SK-N-SH (cell line): ENCODE measurements at regions of chr15 and their contacts with region 1.

Region 1: DNA sequence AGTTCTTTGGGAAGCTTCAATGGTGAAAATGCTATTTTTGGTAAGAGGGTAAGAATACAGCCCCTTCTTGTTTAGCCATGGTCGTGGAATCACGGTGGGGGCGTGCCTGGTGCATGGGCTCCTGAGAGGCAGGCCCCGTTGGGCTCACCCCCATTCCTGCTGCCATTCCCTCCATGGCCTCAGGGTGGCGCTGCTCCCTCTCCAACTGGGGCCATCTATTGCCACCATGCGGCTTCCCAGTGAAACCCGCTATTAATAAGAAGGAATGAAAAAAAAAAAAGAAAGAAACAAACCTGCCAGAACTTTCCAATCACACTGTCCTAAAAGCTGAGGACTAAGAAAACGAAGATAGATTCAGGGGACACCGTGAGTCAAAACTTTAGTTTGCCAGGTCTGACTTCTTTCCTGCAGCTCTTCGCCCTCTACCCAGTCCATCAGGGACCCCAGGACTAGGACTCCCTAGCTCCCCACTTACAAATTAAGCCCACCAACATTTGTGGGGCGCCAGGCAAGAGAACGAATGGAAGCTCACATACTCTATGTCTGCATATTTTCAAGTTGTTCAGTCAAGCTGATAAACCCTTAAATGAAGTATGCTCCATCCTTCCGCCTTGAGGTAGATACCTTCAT is 30.6 kb upstream of the ABHD2 start:
- DNase-seq: peak; percentile 88
- H3K4me3 ChIP-seq: no peak overlapping the region; a peak in 1 of 4 replicates
- H3K27ac ChIP-seq: no peak overlapping the region
- H3K4me1 ChIP-seq: peaks cover 0 to 2% of the 10 kb centered on the region in 2 experiments; a peak in 1 of 4 replicates
- H3K27me3 ChIP-seq: no peaks in the 10 kb centered on the region
- CTCF ChIP-seq: peak; percentile 99
- EP300 ChIP-seq: no peak
- RAD21 ChIP-seq: peak; percentile 98

Region 2: DNA sequence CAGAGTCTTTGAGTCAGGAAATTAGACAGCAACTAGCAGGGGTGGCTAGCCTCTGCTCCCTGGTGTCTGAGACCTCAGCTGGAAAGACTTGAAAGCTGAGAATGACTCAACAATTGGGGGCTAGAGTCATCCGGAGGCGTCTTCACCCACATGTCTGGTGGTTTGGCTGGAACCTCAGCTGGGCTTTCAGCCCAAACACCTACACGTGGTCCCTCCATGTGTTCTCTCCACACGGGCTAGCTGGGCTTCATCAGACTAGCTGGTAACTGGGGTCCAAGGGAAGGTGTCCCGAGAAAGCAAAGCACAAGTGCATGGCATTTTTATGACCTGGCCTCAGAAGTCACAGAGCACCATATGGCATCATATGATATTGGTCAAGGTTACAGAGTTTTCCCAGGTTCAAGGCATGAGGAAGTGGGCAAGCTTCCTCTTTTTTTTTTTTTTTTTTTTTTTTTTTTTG is 10.7 kb after region 1 on chr15:
- CTCF ChIA-PET with region 1: interaction called, 21 read pairs
- POLR2A ChIA-PET with region 1: no interaction called
- DNase-seq: no peak
- H3K4me3 ChIP-seq: no peak overlapping the region
- H3K27ac ChIP-seq: no peak overlapping the region
- H3K4me1 ChIP-seq: no peaks in the 10 kb centered on the region
- H3K27me3 ChIP-seq: no peaks in the 10 kb centered on the region
- CTCF ChIP-seq: no peak
- EP300 ChIP-seq: no peak
- RAD21 ChIP-seq: no peak

Region 3: DNA sequence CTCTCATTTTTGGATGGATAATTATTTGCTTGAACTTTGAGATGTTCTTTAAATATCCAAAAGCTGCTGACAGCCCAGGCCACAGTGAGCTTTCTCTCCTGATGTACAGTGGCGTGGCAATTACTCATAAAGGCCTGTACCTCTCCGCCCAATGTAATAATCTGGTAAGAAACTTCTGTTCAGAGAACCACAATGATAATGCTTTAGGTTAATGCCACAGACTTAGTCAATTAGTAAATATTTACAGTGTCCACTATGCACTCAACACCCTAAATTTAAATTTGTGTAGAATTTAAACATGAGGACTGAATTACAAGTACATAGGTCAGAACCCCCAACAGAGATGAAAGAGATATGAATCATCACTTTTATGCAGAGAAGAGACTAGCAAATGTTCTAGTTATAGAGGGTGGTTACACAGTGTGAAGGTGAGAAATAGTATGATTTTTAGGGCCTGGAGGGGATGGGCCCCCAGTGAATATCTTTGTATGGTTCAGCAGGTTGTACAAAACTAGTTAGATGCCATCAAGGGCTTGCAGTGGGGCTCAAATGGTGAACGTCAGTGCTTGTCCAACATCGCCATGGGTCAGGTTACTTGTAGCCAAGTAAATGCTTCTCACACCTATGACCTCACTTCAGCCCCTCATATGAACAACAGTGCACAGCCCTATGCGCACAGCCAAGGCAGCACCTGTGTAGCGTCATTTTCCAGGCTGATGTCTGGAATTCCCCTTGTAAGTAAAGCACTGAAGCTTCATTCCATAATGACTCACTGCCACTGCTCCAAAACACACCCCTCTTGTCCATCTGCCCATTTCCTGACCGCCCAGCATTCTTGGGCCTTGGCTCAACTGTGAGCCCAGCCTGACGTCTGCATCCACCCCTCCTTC is 43.9 kb after region 1 on chr15:
- CTCF ChIA-PET with region 1: interaction called, 16 read pairs
- POLR2A ChIA-PET with region 1: interaction called, 3 read pairs
- DNase-seq: no peak
- H3K4me3 ChIP-seq: no peak overlapping the region
- H3K27ac ChIP-seq: peak overlapping the region; percentile 54 to 86
- H3K4me1 ChIP-seq: peaks cover 36 to 45% of the 10 kb centered on the region in 2 experiments
- H3K27me3 ChIP-seq: no peaks in the 10 kb centered on the region
- CTCF ChIP-seq: no peak
- EP300 ChIP-seq: peak; percentile 7 to 79; a peak in 2 of 4 replicates
- RAD21 ChIP-seq: no peak

Region 4: GRCh38 chr15:89129123-89129815 is 71.7 kb after region 1 on chr15:
- CTCF ChIA-PET with region 1: interaction called, 134 read pairs
- POLR2A ChIA-PET with region 1: no interaction called
- DNase-seq: peak; percentile 59
- H3K4me3 ChIP-seq: no peak overlapping the region; a peak in 1 of 4 replicates
- H3K27ac ChIP-seq: no peak overlapping the region
- H3K4me1 ChIP-seq: peaks cover 0 to 4% of the 10 kb centered on the region in 2 experiments; a peak in 3 of 4 replicates
- H3K27me3 ChIP-seq: no peaks in the 10 kb centered on the region
- CTCF ChIP-seq: peak; percentile 87
- EP300 ChIP-seq: no peak
- RAD21 ChIP-seq: peak; percentile 72

Region 5: DNA sequence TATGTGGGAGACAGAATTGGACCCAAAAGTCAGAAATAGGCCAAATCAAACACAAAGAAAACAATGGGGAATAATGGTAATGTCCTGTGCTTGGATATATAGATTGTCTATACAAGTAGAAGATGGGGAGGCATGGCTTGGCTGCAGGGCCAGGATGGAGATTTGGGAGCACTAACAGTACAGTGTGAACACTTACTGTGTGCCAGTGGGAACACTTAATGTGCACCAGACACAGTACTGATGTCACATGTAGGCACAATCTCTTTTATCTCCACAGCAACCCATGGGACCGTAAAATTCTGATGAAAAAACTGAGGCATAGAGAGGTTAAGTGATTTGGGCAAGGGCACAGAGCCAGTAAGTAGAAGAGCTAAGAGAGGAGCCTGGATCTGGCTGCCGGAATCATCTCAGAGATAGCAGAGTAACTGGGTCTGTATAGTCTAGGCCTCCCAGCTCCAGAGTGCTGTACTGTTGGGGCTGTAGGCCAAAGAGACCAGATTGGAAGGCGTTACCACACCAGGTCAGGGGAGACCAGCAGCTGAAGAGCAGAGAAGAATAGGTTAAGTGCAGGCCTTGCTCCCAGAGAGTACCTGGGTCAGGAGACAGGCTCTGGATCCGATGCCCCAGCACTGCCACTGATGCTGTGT is 100.4 kb after region 1 on chr15:
- CTCF ChIA-PET with region 1: interaction called, 15 read pairs
- POLR2A ChIA-PET with region 1: no interaction called
- DNase-seq: peak; percentile 50
- H3K4me3 ChIP-seq: no peak overlapping the region
- H3K27ac ChIP-seq: peak overlapping the region in 1 of 2 experiments; percentile 67; a peak in 2 of 4 replicates
- H3K4me1 ChIP-seq: peaks cover 0 to 15% of the 10 kb centered on the region in 2 experiments; a peak in 2 of 4 replicates
- H3K27me3 ChIP-seq: no peaks in the 10 kb centered on the region
- CTCF ChIP-seq: no peak
- EP300 ChIP-seq: no peak
- RAD21 ChIP-seq: no peak

Region 6: GRCh38 chr15:89177633-89178306 is 120.2 kb after region 1 on chr15:
- CTCF ChIA-PET with region 1: interaction called, 363 read pairs
- POLR2A ChIA-PET with region 1: no interaction called
- DNase-seq: peak; percentile 55
- H3K4me3 ChIP-seq: peak overlapping the region in 1 of 2 experiments; percentile 9; a peak in 1 of 4 replicates
- H3K27ac ChIP-seq: no peak overlapping the region
- H3K4me1 ChIP-seq: peaks cover 0 to 2% of the 10 kb centered on the region in 2 experiments; a peak in 1 of 4 replicates
- H3K27me3 ChIP-seq: no peaks in the 10 kb centered on the region
- CTCF ChIP-seq: peak; percentile 94
- EP300 ChIP-seq: no peak
- RAD21 ChIP-seq: peak; percentile 85

Region 7: DNA sequence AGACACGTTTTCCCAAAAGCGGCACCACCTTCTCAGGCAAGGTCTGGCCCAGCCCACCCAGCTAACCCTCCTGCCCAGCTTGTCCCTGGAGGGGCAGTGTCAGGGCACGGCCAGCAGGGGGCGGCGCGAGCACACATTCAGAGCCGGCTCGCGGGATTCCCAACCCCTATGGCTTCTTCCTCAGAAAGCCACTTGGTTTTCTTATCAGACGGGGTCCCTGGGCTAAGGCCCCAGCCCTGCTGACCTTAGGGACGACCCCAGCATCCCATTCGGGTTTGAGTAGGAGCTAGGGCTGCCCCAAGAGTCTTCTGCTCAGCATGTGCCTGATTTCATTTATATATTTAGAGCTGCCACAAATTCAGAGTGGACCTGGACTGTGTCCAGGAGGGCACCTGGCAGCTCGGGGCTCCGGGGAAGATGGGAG is 149.3 kb after region 1 on chr15:
- CTCF ChIA-PET with region 1: interaction called, 10 read pairs
- POLR2A ChIA-PET with region 1: no interaction called
- DNase-seq: peak; percentile 93
- H3K4me3 ChIP-seq: peak overlapping the region; percentile 32 to 36; a peak in 3 of 4 replicates
- H3K27ac ChIP-seq: no peak overlapping the region
- H3K4me1 ChIP-seq: no peaks in the 10 kb centered on the region; a peak in 1 of 4 replicates
- H3K27me3 ChIP-seq: no peaks in the 10 kb centered on the region
- CTCF ChIP-seq: peak; percentile 96
- EP300 ChIP-seq: no peak
- RAD21 ChIP-seq: peak; percentile 85

Region 8: GRCh38 chr15:89462331-89462912 is 404.8 kb after region 1 on chr15:
- CTCF ChIA-PET with region 1: no interaction called
- POLR2A ChIA-PET with region 1: no interaction called
- DNase-seq: no peak
- H3K4me3 ChIP-seq: no peak overlapping the region
- H3K27ac ChIP-seq: no peak overlapping the region
- H3K4me1 ChIP-seq: peaks cover 0 to 6% of the 10 kb centered on the region in 2 experiments; a peak in 1 of 4 replicates
- H3K27me3 ChIP-seq: no peaks in the 10 kb centered on the region
- CTCF ChIP-seq: no peak
- EP300 ChIP-seq: no peak
- RAD21 ChIP-seq: no peak

Region 9: GRCh38 chr15:89500397-89501270 is 443.0 kb after region 1 on chr15:
- CTCF ChIA-PET with region 1: no interaction called
- POLR2A ChIA-PET with region 1: no interaction called
- DNase-seq: no peak
- H3K4me3 ChIP-seq: no peak overlapping the region
- H3K27ac ChIP-seq: no peak overlapping the region
- H3K4me1 ChIP-seq: peaks cover 0 to 8% of the 10 kb centered on the region in 2 experiments; a peak in 1 of 4 replicates
- H3K27me3 ChIP-seq: no peaks in the 10 kb centered on the region
- CTCF ChIP-seq: peak; percentile 47
- EP300 ChIP-seq: no peak
- RAD21 ChIP-seq: no peak